Activated CD8-positive, alpha-beta T cell treated with anti-CD3 and anti-CD28 coated beads for 36 hours (primary cell): ENCODE measurements at regions of chr5 and their contacts with region 1.

Region 1: DNA sequence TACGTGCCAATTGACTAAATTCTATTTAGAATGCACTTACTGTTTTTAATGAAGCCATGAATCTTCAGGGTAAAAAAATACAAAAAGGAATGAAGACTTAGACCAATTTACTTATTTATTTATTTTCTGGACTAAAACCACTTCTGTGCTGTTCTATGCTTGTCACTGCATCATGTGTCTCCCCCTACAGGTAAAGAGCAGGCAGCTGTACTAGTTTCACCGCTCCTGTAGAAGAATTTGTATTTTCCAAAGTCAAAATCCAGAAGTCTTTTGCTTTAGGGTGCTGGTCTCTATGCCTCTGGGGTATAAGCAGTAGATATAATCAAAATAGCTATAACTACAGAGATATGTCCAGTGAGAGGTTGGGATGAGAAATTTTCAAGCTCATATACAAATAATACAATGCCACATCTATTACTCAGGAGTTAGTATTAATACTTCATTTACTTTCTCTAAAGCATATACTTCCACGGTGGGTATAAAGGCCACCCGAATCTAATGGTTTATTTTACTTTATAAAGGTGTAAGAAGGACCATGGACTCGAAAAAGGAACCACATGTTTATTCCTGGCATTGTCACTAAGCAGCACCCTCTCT is 591.5 kb downstream of the RAB3C start:
- DNase-seq: peak; percentile 47
- ATAC-seq: peak; percentile 76
- H3K4me3 Mint-ChIP-seq: no peak overlapping the region
- H3K27ac Mint-ChIP-seq: no peak overlapping the region
- H3K4me1 Mint-ChIP-seq: peaks cover 19% of the 10 kb centered on the region
- H3K27me3 Mint-ChIP-seq: no peaks in the 10 kb centered on the region
- CTCF ChIP-seq: peak; percentile 92

Region 2: DNA sequence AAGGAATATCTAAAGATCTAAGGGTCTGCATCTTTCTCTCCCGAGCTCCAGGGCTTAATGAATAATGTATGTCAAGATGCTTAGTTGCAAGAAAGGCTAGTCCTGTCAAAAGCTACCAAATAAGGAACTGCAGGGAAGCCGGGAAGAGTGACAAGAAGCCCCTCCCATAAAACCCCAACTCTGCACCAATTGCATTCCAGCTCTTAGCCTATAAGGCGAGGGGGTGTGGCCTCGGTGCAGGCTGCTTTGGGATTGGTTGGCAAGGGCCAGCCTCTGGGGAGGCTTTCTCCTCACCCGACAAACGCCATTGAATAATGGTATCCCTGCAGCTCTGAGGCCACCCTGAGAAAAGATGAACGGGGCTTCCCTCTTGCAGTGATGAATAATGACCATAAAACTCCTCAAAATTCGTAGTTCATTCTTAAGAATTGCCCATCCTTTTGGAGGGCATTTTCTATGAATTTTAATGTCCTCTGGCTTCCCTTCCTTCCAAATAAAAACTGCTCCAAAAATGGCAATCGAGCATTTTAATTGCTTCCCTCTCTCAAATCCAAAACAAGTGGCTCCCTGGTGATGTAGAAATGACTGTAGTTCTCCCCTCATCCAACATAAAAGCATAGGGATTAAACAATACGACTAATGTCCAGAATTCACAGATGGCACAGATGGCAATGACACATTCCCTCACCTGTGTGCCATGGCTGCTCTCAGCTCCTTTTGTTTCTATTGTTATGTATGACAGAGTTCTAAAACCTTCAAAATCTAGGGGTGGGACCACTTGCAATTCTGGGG is 174.3 kb before region 1 on chr5:
- CTCF ChIA-PET with region 1: interaction called, 10 read pairs
- POLR2A ChIA-PET with region 1: interaction called, 3 read pairs
- intact Hi-C with region 1: no loop called
- DNase-seq: no peak
- ATAC-seq: no peak
- H3K4me3 Mint-ChIP-seq: no peak overlapping the region
- H3K27ac Mint-ChIP-seq: no peak overlapping the region
- H3K4me1 Mint-ChIP-seq: peaks cover 56% of the 10 kb centered on the region
- H3K27me3 Mint-ChIP-seq: no peaks in the 10 kb centered on the region
- CTCF ChIP-seq: no peak

Region 3: DNA sequence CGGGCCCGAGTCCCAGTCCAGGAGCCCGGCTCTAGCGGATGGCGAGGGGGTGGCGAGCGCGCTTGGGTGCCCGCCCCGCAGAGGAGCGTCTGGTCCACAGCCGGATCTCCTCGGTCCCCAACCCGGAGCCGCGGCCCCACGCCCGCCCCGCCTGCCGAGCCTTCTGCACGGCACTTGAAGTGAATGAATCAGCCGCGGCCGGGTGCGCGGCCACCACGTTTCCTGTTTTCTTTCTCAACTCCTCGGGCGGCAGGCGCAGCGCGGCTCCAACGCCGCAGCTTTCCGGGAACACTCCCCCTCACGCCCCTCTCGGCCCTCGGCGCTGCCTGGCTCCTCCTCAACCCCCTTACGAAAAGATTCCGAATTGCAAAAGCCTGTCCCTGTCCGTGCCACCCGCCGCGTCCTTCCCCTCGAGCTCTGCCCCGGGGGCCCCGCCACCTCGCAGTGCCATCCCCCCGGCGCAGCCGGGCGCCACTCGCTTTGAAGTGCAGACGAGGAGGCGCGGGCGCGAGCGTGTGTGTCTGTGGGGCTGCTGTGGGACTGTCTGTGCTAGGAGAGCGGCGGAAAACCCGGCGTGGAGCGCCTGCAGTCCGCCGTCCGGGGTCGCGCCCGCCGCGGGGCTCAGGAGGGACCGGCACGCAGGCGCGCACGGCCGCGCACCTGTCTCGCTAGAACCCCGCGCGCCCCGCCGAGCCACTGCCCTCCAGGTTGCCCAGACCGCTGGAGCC is 134.9 kb before region 1 on chr5:
- CTCF ChIA-PET with region 1: interaction called, 135 read pairs
- POLR2A ChIA-PET with region 1: interaction called, 3 read pairs
- intact Hi-C with region 1: loop called (anchors 2 kb)
- DNase-seq: peak; percentile 96
- ATAC-seq: peak; percentile 74
- H3K4me3 Mint-ChIP-seq: peak overlapping the region; percentile 89
- H3K27ac Mint-ChIP-seq: peak overlapping the region; percentile 85
- H3K4me1 Mint-ChIP-seq: peaks cover 38% of the 10 kb centered on the region
- H3K27me3 Mint-ChIP-seq: no peaks in the 10 kb centered on the region
- CTCF ChIP-seq: no peak

Region 4: GRCh38 chr5:59133682-59134261 is 40.6 kb before region 1 on chr5:
- CTCF ChIA-PET with region 1: interaction called, 33 read pairs
- POLR2A ChIA-PET with region 1: no interaction called
- intact Hi-C with region 1: loop called (anchors 5 kb)
- DNase-seq: no peak
- ATAC-seq: no peak
- H3K4me3 Mint-ChIP-seq: no peak overlapping the region
- H3K27ac Mint-ChIP-seq: no peak overlapping the region
- H3K4me1 Mint-ChIP-seq: peaks cover 52% of the 10 kb centered on the region
- H3K27me3 Mint-ChIP-seq: no peaks in the 10 kb centered on the region
- CTCF ChIP-seq: no peak

Region 5: GRCh38 chr5:59164041-59164830 is 10.1 kb before region 1 on chr5:
- CTCF ChIA-PET with region 1: interaction called, 25 read pairs
- POLR2A ChIA-PET with region 1: no interaction called
- intact Hi-C with region 1: no loop called
- DNase-seq: no peak
- ATAC-seq: no peak
- H3K4me3 Mint-ChIP-seq: no peak overlapping the region
- H3K27ac Mint-ChIP-seq: no peak overlapping the region
- H3K4me1 Mint-ChIP-seq: peaks cover 15% of the 10 kb centered on the region
- H3K27me3 Mint-ChIP-seq: no peaks in the 10 kb centered on the region
- CTCF ChIP-seq: no peak

Region 6: DNA sequence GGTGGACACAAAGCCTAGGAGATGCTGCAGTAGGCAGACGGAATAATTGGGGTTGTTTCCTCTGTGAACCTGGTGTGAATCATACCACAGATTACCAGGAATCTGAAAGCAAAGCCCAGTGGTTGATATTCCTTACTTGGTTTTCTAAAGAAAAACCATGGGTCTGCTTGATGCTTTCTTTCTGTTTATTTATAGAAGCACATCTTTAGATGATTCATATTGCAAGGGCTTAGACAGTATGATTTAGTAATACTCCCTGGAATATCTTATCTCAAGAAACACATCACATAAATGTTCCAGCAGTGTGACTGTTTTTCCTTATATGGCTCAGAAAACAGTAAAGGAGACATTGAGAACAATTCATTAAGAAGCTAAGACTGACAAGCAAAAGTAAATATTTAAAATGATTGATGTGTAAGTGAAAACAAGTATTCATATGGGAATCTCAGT is 31.8 kb after region 1 on chr5:
- CTCF ChIA-PET with region 1: no interaction called
- POLR2A ChIA-PET with region 1: no interaction called
- intact Hi-C with region 1: no loop called
- DNase-seq: no peak
- ATAC-seq: no peak
- H3K4me3 Mint-ChIP-seq: no peak overlapping the region
- H3K27ac Mint-ChIP-seq: no peak overlapping the region
- H3K4me1 Mint-ChIP-seq: peaks cover 6% of the 10 kb centered on the region
- H3K27me3 Mint-ChIP-seq: no peaks in the 10 kb centered on the region
- CTCF ChIP-seq: no peak